PC-3 (cell line): ENCODE measurements at regions of chr3 and their contacts with region 1.

Region 1: DNA sequence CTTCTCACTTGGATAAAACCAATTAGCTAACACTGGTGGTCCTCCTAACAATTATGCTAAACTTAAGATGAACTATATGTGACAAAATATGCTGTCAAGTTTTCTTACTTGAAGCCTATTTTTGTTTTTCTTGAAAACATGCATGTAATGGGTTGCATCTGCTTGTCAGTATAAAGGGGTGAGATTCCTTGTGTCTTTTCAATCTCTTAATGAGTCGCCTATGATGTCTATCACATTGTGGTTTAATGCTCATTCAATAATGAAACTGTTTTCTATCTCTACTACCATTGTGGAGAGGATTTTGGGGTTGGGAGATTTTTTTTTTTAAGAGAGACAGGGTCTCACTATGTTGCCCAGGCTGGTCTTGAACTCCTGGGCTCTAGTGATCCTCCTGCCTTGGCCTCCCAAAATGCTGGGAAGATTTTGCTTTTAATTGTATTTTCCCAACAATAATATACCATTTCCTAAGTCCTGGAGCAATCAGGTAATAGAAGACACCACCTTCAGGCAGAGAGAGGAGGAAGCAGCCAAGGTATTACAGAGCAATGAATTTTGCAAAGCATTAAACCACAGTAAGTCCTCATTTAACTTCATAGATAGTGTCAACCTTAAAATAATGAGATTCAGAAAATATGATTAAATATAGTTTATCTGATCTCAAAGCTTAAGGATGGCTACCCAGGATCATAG is 17.4 kb upstream of the TRMT10C start:
- DNase-seq: peak; percentile 10
- ATAC-seq: peak; percentile 77
- H3K4me3 ChIP-seq: no peak overlapping the region
- H3K27ac ChIP-seq: no peak overlapping the region
- H3K4me1 ChIP-seq: no peaks in the 10 kb centered on the region
- H3K27me3 ChIP-seq: no peaks in the 10 kb centered on the region
- CTCF ChIP-seq: peak; percentile 58

Region 2: DNA sequence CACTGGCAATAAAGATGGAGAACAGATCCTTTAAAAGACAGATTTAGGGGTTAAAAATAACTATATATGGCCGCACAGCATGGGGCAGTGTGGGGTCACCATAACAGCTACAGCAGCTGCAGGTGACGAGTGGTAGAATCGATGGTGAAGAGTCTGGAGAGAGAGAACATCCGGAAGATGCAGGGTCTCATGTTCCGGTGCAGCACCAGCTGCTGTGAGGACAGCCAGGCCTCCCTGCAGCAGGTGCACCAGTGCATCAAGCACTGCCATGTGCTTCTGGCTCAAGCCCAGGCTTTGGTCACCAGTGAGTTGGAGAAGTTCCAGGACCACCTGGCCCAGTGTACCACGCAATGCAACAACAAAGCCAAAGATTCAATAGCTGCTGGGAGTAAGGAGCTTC is 130.2 kb before region 1 on chr3:
- CTCF ChIA-PET with region 1: no interaction called
- POLR2A ChIA-PET with region 1: no interaction called
- intact Hi-C with region 1: loop called (anchors 10 kb)
- DNase-seq: no peak
- ATAC-seq: no peak
- H3K4me3 ChIP-seq: no peak overlapping the region
- H3K27ac ChIP-seq: no peak overlapping the region
- H3K4me1 ChIP-seq: no peaks in the 10 kb centered on the region
- H3K27me3 ChIP-seq: no peaks in the 10 kb centered on the region
- CTCF ChIP-seq: no peak

Region 3: DNA sequence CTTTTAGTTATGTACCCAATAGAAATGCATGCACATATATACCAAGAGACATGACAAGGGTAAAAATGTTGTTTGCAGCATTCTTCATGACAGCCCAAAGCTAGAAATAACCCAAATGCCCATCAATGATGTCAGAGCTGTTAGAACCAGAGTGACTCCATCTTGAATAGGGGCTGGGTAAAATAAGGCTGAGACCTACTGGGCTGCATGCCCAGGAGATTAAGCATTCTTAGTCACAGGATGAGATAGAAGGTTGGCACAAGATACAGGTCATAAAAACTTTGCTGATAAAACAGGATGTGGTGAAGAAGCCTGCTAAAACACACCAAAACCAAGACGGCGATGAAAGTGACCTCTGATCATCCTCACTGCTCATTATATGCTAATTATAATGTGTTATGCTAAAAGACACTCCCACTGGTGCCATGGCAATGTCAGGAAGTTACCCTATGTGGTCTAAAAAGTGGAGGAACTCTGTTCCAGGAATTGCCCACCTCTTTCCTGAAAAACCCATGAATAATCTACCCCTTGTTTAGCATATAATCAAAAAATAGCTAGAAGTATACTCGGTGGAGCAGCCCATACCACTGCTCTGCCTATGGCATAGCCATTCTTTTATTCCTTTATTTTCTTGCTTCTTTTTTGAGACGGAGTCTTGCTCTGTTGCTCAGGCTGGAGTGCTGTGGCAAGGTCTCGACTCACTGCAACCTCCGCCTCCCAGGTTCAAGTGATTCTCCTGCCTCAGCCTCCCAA is 99.7 kb after region 1 on chr3:
- CTCF ChIA-PET with region 1: no interaction called
- POLR2A ChIA-PET with region 1: no interaction called
- intact Hi-C with region 1: no loop called
- DNase-seq: peak; percentile 88
- ATAC-seq: peak; percentile 82
- H3K4me3 ChIP-seq: no peak overlapping the region
- H3K27ac ChIP-seq: peak overlapping the region; percentile 6
- H3K4me1 ChIP-seq: peaks cover 26% of the 10 kb centered on the region
- H3K27me3 ChIP-seq: no peaks in the 10 kb centered on the region
- CTCF ChIP-seq: no peak